Calu3 (cell line): ENCODE measurements at regions of chr15 and their contacts with region 1.

Region 1: GRCh38 chr15:68126396-68126795 is 72.3 kb downstream of the PIAS1 start:
- DNase-seq: no peak
- H3K4me3 Mint-ChIP-seq: no peak overlapping the region
- H3K27ac Mint-ChIP-seq: no peak overlapping the region
- H3K4me1 Mint-ChIP-seq: no peaks in the 10 kb centered on the region
- H3K27me3 Mint-ChIP-seq: no peaks in the 10 kb centered on the region
- CTCF ChIP-seq: no peak

Region 2: DNA sequence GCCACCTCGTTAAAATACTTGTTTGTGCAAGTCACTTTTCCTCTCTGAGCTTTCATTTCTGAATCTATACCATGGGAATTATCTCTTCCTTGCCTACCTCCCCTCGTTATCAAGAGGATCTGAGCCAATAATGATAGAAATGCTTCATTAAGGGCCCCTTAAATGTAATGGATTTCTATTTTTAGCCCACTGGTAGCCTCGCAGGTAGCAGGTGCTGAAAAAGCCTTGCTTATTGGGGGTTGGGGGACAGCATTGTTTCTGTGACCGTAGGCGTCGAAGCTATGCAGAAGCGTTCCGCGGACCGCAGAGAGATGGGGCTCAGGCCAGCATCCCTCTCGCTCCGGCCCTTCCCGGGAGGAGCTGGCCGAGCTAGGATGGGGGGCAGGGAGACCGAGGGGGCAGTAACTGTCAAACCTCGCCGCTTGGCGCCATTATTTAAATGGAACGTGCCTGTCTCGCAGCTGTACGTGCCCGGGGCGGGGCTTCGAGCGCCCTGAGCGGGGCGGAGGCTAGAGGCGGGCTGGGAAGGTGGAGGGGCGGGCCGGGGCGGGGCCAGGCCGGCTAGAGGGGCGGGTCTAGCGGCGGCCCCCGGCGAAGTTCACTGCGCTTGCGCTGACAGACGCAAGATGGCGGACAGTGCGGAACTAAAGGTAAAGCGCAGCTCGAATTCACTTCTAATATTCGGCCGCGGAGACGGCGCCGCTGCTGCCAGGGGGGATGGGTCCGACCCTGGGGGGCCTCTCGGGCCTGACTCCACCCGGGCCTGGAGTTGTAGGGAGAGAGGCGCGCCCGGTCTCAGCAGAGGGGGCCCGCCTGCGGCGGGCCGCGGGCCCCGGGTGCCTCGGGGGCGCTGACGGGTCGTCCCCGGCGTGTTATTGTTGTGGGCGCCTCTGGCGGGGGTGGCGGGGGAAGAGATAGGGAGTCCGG is 72.4 kb before region 1 on chr15 and contains the start of gene PIAS1:
- CTCF ChIA-PET with region 1: no interaction called
- intact Hi-C with region 1: loop called (anchors 5 kb)
- DNase-seq: peak; percentile 98
- H3K4me3 Mint-ChIP-seq: peak within 1 kb of the TSS; percentile 85
- H3K27ac Mint-ChIP-seq: peak within 1 kb of the TSS; percentile 22
- H3K4me1 Mint-ChIP-seq: peaks cover 42% of the 10 kb centered on the region
- H3K27me3 Mint-ChIP-seq: no peaks in the 10 kb centered on the region
- CTCF ChIP-seq: no peak
- total RNA-seq, gene PIAS1: 51.7 and 60.8 TPM in 2 replicates